CD4-positive, alpha-beta T cell (primary cell): ENCODE measurements at regions of chr5 and their contacts with region 1.

Region 1: GRCh38 chr5:10441083-10441991 is at the start of gene ROPN1L:
- DNase-seq: peak; percentile 56 to 90 (median 75)
- ATAC-seq: peak; percentile 93
- H3K4me3 ChIP-seq: peak within 1 kb of the TSS; percentile 84
- H3K4me3 Mint-ChIP-seq: peak within 1 kb of the TSS; percentile 87
- H3K27ac ChIP-seq: no peak within 1 kb of the TSS
- H3K27ac Mint-ChIP-seq: no peak within 1 kb of the TSS
- H3K4me1 ChIP-seq: peaks cover 53% of the 10 kb centered on the region
- H3K4me1 Mint-ChIP-seq: peaks cover 60% of the 10 kb centered on the region
- H3K27me3 ChIP-seq: no peaks in the 10 kb centered on the region
- H3K27me3 Mint-ChIP-seq: no peaks in the 10 kb centered on the region
- CTCF ChIP-seq: no peak
- total RNA-seq, gene ROPN1L: 0.42 to 0.58 TPM

Region 2: GRCh38 chr5:10249948-10250803 is 191.2 kb before region 1 on chr5 and contains the start of gene CCT5:
- CTCF ChIA-PET with region 1: interaction called, 3 read pairs
- POLR2A ChIA-PET with region 1: no interaction called
- intact Hi-C with region 1: loop called in 1 of 2 experiments (anchors 2 kb)
- DNase-seq: peak; percentile 76 to 98 (median 88)
- ATAC-seq: peak; percentile 81
- H3K4me3 ChIP-seq: peak within 1 kb of the TSS; percentile 95
- H3K4me3 Mint-ChIP-seq: peak within 1 kb of the TSS; percentile 98
- H3K27ac ChIP-seq: peak within 1 kb of the TSS; percentile 84 to 100
- H3K27ac Mint-ChIP-seq: peak within 1 kb of the TSS; percentile 99
- H3K4me1 ChIP-seq: peaks cover 43% of the 10 kb centered on the region
- H3K4me1 Mint-ChIP-seq: peaks cover 60% of the 10 kb centered on the region
- H3K27me3 ChIP-seq: no peaks in the 10 kb centered on the region
- H3K27me3 Mint-ChIP-seq: no peaks in the 10 kb centered on the region
- CTCF ChIP-seq: no peak
- total RNA-seq, gene CCT5: 27.4 to 32.0 TPM

Region 3: GRCh38 chr5:10563945-10564837 is 122.9 kb after region 1 on chr5 and contains the start of gene ANKRD33B:
- CTCF ChIA-PET with region 1: no interaction called
- POLR2A ChIA-PET with region 1: no interaction called
- intact Hi-C with region 1: loop called in 1 of 2 experiments (anchors 5 kb)
- DNase-seq: peak; percentile 49 to 89 (median 70)
- ATAC-seq: peak; percentile 81
- H3K4me3 ChIP-seq: peak within 1 kb of the TSS; percentile 63
- H3K4me3 Mint-ChIP-seq: peak within 1 kb of the TSS; percentile 87
- H3K27ac ChIP-seq: no peak within 1 kb of the TSS
- H3K27ac Mint-ChIP-seq: no peak within 1 kb of the TSS
- H3K4me1 ChIP-seq: peaks cover 40% of the 10 kb centered on the region
- H3K4me1 Mint-ChIP-seq: peaks cover 13% of the 10 kb centered on the region
- H3K27me3 ChIP-seq: peaks cover 0 to 11% of the 10 kb centered on the region in 2 experiments
- H3K27me3 Mint-ChIP-seq: peaks cover 5% of the 10 kb centered on the region
- CTCF ChIP-seq: no peak
- total RNA-seq, gene ANKRD33B: 0.99 to 1.3 TPM

Region 4: GRCh38 chr5:10655161-10655971 is 214.0 kb after region 1 on chr5:
- CTCF ChIA-PET with region 1: no interaction called
- POLR2A ChIA-PET with region 1: no interaction called
- intact Hi-C with region 1: no loop called
- DNase-seq: no peak
- ATAC-seq: no peak
- H3K4me3 ChIP-seq: no peak overlapping the region
- H3K4me3 Mint-ChIP-seq: no peak overlapping the region
- H3K27ac ChIP-seq: no peak overlapping the region
- H3K27ac Mint-ChIP-seq: no peak overlapping the region
- H3K4me1 ChIP-seq: no peaks in the 10 kb centered on the region
- H3K4me1 Mint-ChIP-seq: no peaks in the 10 kb centered on the region
- H3K27me3 ChIP-seq: no peaks in the 10 kb centered on the region
- H3K27me3 Mint-ChIP-seq: no peaks in the 10 kb centered on the region
- CTCF ChIP-seq: no peak